ENCODE measurements at regions of chr6 and their contacts with region 1.

Region 1: DNA sequence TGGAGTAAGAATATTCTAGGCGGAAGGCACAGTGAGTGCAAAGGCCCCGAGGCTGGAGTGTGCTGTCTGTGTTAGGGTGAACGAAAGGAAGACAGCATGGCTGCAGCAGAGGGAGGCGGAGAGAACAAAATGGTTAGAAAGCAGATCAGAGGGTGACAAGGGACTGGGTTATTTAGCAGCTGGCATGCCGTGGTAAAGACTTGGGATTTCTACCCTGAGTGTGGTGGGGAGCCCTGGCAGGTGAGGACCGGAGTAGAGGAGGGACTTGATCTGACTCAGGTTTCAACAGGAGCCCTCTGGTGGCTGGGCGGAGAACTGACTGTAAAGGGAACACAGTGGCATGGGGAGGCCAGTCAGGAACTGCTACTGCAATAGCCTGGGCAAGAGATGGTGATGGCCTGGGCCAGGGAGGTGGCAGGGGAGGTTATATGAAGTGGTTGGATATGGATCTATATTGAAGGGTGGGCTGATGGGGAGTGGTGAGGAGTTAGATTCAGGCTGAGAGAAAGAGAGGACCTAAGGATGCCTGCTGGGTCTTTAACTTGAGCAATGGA is 38.0 kb downstream of the PIM1 start:
- DNase-seq: peak; percentile 72 to 91 (median 85)
- ATAC-seq: peak; percentile 61 to 81 (median 74)
- H3K4me3 ChIP-seq: no peak overlapping the region
- H3K4me3 Mint-ChIP-seq: peak overlapping the region in 2 of 3 donors; percentile 6 to 60
- H3K27ac ChIP-seq: peak overlapping the region; percentile 32
- H3K27ac Mint-ChIP-seq: peak overlapping the region; percentile 91 to 92
- H3K4me1 ChIP-seq: peaks cover 20 to 54% of the 10 kb centered on the region in 2 experiments
- H3K4me1 Mint-ChIP-seq: peaks cover 59 to 65% (median 64%) of the 10 kb centered on the region in 3 donors
- H3K27me3 ChIP-seq: no peaks in the 10 kb centered on the region
- H3K27me3 Mint-ChIP-seq: no peaks in the 10 kb centered on the region

Region 2: DNA sequence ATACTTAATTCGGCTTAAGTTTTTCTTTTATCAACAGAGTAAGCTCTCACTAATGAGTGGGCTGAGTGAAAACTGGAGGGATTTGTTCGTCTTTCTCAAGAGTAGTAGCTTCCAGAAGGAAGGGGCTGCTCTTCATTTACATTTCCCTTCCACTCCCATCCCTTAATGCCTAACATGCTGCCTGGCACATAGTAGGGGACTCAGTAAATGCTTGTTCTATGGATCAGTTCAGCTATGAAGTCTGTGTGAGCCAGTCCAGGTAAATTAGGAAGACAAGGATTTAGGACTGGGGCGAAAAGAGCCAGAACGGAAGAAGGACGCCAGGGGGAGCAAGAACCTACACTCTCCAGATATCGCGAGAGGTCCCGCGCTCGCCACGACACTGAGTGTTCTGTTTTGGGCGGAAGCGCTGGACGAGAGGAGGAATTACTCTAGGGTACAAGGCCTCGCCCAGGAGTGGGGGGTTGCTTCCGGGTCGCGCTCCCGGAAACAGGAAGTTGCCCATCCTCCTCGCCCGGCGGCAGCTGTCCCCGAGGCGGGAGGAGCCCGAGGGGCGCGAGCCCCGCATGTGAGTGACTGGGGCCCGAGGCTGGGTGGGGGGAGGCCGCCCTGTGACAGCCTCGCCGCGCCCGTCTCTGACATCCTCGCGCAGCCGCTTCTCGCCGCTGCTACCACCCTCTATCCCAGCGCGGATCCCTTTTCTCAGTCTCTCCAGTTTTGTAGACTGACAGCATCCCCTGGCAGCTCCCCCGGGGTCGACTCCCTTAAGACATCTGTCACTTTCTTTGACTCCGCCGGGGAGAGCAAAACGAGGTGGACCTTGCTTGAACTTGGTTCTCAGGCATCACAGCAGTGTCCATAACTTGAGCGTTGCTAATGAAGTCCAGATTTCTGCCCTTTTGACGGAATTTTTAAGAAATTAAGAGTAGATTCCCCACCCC is 322.2 kb before region 1 on chr6 and contains the start of gene C6orf89:
- CTCF ChIA-PET with region 1: interaction called in 1 of 2 experiments, 14 read pairs
- POLR2A ChIA-PET with region 1: interaction called in 1 of 2 experiments, 4 read pairs
- DNase-seq: peak; percentile 91 to 99 (median 97)
- ATAC-seq: peak; percentile 98 to 100 (median 99)
- H3K4me3 ChIP-seq: peak within 1 kb of the TSS; percentile 77 to 85
- H3K4me3 Mint-ChIP-seq: peak within 1 kb of the TSS; percentile 86 to 87 (median 87)
- H3K27ac ChIP-seq: peak within 1 kb of the TSS; percentile 94
- H3K27ac Mint-ChIP-seq: peak within 1 kb of the TSS; percentile 97 to 98
- H3K4me1 ChIP-seq: peaks cover 11 to 15% of the 10 kb centered on the region in 2 experiments
- H3K4me1 Mint-ChIP-seq: peaks cover 35 to 48% (median 48%) of the 10 kb centered on the region in 3 donors
- H3K27me3 ChIP-seq: no peaks in the 10 kb centered on the region
- H3K27me3 Mint-ChIP-seq: no peaks in the 10 kb centered on the region
- total RNA-seq, gene C6orf89: 32.6 to 57.9 (median 46.1) TPM

Region 3: DNA sequence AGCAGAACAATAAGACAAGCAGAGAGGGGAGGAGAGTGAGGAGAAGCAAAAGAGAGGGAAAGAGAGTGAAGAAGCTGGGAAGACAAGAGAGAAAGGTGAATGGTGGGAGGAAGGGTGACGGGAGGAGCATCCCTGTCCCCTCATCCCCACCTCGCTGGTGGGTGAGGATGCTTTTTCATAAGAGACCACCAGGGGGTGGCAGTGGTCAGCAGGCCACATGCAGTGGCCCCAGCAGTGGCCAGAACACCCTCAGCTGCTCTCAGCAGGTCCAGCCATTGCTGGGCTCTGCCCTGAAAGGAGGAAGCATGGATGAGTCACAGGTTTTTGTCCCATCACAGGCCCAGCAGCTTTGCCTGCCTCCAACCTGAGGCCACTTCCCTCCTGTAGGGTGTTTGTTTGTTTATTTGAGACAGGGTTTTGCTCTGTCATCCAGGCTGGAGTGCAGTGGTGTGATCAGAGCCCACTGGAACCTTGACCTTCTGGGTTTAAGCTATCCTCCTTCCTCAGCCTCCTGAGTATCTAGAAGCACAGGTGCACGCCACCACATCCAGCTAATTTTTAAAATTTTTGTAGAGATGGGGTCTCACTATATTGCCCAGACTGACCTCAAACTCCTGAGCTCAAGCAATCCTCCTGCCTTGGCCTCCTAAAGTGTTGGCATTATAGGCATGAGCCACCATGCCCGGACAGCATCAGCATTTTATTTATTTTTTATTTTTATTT is 178.6 kb before region 1 on chr6:
- CTCF ChIA-PET with region 1: interaction called, 3 to 11 read pairs
- POLR2A ChIA-PET with region 1: no interaction called
- DNase-seq: peak in 19 of 35 experiments; percentile 16 to 65 (median 28)
- ATAC-seq: peak; percentile 64 to 75 (median 67)
- H3K4me3 ChIP-seq: no peak overlapping the region
- H3K4me3 Mint-ChIP-seq: no peak overlapping the region
- H3K27ac ChIP-seq: no peak overlapping the region
- H3K27ac Mint-ChIP-seq: peak overlapping the region; percentile 2 to 61
- H3K4me1 ChIP-seq: peaks cover 0 to 16% of the 10 kb centered on the region in 2 experiments
- H3K4me1 Mint-ChIP-seq: peaks cover 25 to 47% (median 28%) of the 10 kb centered on the region in 3 donors
- H3K27me3 ChIP-seq: no peaks in the 10 kb centered on the region
- H3K27me3 Mint-ChIP-seq: no peaks in the 10 kb centered on the region

Region 4: DNA sequence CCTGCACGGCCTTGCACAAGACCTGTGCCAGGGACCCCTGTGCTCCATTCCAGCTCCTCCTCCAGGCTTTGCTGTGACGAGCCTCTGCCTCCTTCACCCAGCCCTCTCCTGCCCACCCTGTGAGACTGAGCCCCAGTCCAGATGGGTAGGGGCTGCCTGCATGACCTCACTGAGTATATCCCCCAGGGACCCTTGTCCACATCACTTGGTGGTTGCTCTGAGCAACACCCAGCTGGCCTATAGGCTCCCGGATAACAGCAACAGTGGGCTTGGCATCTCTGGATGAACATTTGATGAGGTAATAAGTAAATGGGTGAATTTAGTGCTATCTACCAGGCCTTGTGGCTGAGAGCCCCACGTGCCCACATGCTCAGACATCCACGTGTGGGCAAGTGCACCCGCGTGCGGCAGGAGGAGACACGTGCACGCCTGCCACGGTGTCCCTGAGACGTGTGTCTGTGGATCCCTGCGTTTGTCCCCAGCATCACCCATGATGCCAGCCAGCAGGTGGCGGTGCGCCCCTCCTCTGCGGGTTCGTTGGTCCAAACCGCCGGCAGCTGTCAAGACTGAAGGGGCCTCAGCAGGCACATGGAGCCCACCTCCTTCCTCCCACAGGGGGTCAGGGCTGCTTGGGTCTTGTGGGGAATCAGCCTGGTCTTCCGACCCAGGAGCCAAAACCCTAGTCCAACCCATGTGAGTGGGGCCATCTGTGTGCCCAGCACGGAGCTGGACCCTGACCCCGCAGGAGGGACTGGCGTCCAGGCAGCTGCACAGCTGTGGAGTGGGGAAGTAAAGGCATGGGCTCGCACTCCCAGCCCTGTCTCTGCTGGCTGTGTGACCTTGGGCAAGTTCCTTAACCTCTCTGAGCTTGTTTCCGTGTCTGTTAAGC is 156.6 kb before region 1 on chr6:
- CTCF ChIA-PET with region 1: interaction called in 1 of 2 experiments, 39 read pairs
- POLR2A ChIA-PET with region 1: no interaction called
- DNase-seq: peak; percentile 76 to 93 (median 86)
- ATAC-seq: peak; percentile 53 to 79 (median 62)
- H3K4me3 ChIP-seq: no peak overlapping the region
- H3K4me3 Mint-ChIP-seq: peak overlapping the region; percentile 31 to 72 (median 49)
- H3K27ac ChIP-seq: peak overlapping the region; percentile 93
- H3K27ac Mint-ChIP-seq: peak overlapping the region; percentile 87 to 95
- H3K4me1 ChIP-seq: peaks cover 44 to 60% of the 10 kb centered on the region in 2 experiments
- H3K4me1 Mint-ChIP-seq: peaks cover 58 to 66% (median 62%) of the 10 kb centered on the region in 3 donors
- H3K27me3 ChIP-seq: no peaks in the 10 kb centered on the region
- H3K27me3 Mint-ChIP-seq: no peaks in the 10 kb centered on the region

Region 5: DNA sequence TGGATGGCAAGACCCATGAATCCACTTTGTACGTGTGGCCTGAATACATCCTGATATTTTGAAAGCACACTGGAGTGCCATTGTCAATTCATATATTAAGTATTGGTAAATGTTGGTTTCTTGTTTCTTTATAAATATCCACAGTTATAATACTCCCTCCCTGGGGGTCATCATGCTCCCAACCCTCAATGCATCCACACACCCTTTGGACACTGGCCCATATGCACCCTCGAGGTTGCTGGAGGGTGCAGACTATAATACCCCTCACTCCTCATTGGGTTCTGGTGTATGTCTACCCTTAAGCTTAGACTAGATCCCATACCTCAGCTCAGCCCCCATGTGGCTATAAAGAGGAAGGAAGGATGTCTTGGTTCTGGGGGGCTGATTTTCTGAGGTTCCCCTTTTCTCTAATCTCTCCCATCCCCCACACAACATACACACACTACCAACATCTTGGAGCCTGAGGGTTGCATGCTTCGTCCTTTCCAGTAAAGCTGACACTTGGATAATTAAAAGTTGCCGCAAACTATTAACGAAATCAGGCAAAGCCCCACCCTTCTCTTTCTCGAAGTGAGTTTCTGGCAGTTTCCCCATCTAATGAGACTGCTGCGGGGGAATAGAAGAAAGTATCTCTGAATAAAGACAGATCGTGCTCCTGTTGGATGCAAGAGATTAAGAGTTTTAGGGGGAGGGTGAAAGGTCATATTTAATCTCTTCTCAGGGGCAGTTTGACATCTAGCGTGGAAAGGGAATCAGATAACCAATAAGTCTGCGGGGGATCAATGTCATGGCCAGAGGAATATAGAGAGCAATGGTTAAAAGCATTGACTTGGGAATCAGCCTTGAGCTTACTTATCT is 30.7 kb before region 1 on chr6:
- CTCF ChIA-PET with region 1: interaction called, 9 to 72 read pairs
- POLR2A ChIA-PET with region 1: interaction called, 4 read pairs
- DNase-seq: no peak
- ATAC-seq: no peak
- H3K4me3 ChIP-seq: no peak overlapping the region
- H3K4me3 Mint-ChIP-seq: peak overlapping the region in 1 of 3 donors; percentile 32
- H3K27ac ChIP-seq: no peak overlapping the region
- H3K27ac Mint-ChIP-seq: peak overlapping the region; percentile 67 to 81
- H3K4me1 ChIP-seq: peaks cover 34 to 74% of the 10 kb centered on the region in 2 experiments
- H3K4me1 Mint-ChIP-seq: peaks cover 74 to 81% (median 75%) of the 10 kb centered on the region in 3 donors
- H3K27me3 ChIP-seq: no peaks in the 10 kb centered on the region
- H3K27me3 Mint-ChIP-seq: no peaks in the 10 kb centered on the region

Region 6: GRCh38 chr6:37432916-37433656 is 225.1 kb after region 1 on chr6 and contains the start of gene CMTR1:
- CTCF ChIA-PET with region 1: no interaction called
- POLR2A ChIA-PET with region 1: no interaction called
- DNase-seq: peak; percentile 87 to 98 (median 94)
- ATAC-seq: peak; percentile 89 to 93 (median 92)
- H3K4me3 ChIP-seq: peak within 1 kb of the TSS; percentile 66 to 81
- H3K4me3 Mint-ChIP-seq: peak within 1 kb of the TSS; percentile 92 to 93 (median 93)
- H3K27ac ChIP-seq: peak within 1 kb of the TSS; percentile 86
- H3K27ac Mint-ChIP-seq: peak within 1 kb of the TSS; percentile 95 to 96
- H3K4me1 ChIP-seq: peaks cover 7 to 25% of the 10 kb centered on the region in 2 experiments
- H3K4me1 Mint-ChIP-seq: peaks cover 45 to 52% (median 49%) of the 10 kb centered on the region in 3 donors
- H3K27me3 ChIP-seq: no peaks in the 10 kb centered on the region
- H3K27me3 Mint-ChIP-seq: peaks cover 3 to 6% of the 10 kb centered on the region in 2 donors
- total RNA-seq, gene CMTR1: 62.5 to 82.7 (median 75.2) TPM